ENCODE measurements at regions of chr4 and their contacts with region 1.

Region 1: GRCh38 chr4:75724066-75724866 is at the start of gene USO1:
- DNase-seq: peak; percentile 98 to 100 (median 99)
- ATAC-seq: peak; percentile 98
- H3K4me3 ChIP-seq: peak within 1 kb of the TSS; percentile 87
- H3K4me3 Mint-ChIP-seq: peak within 1 kb of the TSS; percentile 93 to 100 (median 100)
- H3K27ac ChIP-seq: peak within 1 kb of the TSS; percentile 91
- H3K27ac Mint-ChIP-seq: peak within 1 kb of the TSS; percentile 97 to 100 (median 99)
- H3K4me1 ChIP-seq: peaks cover 25 to 30% of the 10 kb centered on the region in 2 donors
- H3K4me1 Mint-ChIP-seq: peaks cover 32 to 60% (median 59%) of the 10 kb centered on the region in 7 donors
- H3K27me3 ChIP-seq: no peaks in the 10 kb centered on the region
- H3K27me3 Mint-ChIP-seq: peaks cover 0 to 4% (median 0%) of the 10 kb centered on the region in 5 donors
- total RNA-seq, gene USO1: 17.8 to 54.8 (median 35.0) TPM

Region 2: DNA sequence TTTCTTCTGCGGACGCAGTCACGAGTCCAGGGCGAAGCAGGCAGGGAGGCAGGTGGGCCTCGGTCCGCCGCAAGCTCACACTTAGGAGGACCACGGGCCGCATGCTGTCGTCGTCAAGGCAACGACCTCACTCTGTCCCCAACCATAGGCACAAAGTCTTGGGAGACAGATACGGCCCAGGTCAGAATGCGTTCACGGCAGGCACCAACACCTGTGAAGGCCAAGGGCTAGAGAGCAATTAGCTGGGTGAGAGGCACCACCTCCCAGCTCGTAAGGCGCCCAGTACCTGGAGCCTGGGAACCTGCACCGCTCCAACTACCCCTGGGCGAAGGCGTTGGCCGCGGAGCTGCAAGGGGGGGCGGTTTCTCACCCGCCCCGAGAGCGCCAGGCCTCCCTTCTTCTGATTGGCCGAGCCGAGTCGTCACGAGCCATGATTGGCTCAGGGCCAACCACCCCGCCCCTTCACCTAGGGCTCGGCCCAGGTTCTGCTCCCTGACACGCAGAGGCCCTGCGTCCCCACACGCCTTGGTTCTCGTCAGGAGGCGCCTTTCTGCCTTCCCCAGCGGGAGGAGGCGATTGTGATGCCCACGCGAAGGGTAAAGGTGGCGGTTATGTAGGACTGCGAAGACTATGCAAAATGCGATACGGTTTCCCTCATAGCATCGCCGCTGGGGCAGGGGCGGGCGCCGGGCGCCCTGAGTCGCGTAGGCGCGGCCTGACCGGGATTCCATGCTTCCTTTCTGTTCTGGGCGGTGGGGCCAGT is 93.9 kb before region 1 on chr4 and contains the start of gene CDKL2:
- CTCF ChIA-PET with region 1: interaction called, 4 read pairs
- POLR2A ChIA-PET with region 1: interaction called, 11 read pairs
- intact Hi-C with region 1: loop called (anchors 1 kb)
- DNase-seq: peak; percentile 85 to 93 (median 91)
- ATAC-seq: peak; percentile 100
- H3K4me3 ChIP-seq: peak within 1 kb of the TSS; percentile 74
- H3K4me3 Mint-ChIP-seq: peak within 1 kb of the TSS; percentile 88 to 97 (median 94)
- H3K27ac ChIP-seq: peak within 1 kb of the TSS; percentile 73
- H3K27ac Mint-ChIP-seq: peak within 1 kb of the TSS; percentile 66 to 94 (median 86)
- H3K4me1 ChIP-seq: peaks cover 0 to 7% of the 10 kb centered on the region in 2 donors
- H3K4me1 Mint-ChIP-seq: peaks cover 6 to 18% (median 11%) of the 10 kb centered on the region in 7 donors
- H3K27me3 ChIP-seq: no peaks in the 10 kb centered on the region
- H3K27me3 Mint-ChIP-seq: peaks cover 0 to 12% (median 0%) of the 10 kb centered on the region in 5 donors
- total RNA-seq, gene CDKL2: 0.22 to 1.2 (median 0.34) TPM

Region 3: DNA sequence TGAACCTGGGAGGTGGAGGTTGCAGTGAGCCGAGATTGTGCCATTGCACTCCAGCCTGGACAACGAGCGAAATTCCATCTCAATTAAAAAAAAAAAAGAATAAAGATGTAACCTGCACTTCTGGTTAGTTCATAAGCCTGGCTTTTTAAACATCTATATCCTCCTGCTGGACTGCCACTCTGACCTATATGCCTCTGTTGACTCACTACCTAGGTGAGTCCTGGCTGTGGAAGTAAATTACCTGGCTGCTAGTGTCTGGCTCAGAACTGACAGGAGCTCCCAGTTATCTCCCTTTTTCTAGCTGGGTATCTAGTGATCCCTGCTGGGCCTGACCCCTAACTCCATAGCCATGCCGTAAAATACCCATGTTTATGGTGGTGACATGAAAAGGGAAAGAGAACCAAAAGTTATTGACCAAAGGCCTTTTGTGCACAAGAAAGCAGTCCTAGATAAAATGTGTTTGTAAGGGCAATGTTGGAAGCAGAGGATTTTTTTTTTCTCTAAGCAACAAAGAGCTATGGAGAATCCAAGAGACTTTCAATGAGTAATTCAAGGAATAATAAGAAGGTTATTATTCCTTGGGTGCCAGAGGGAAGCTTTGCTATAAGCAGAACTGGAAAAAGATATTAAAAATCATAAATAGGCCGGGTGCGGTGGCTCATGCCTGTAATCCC is 40.6 kb before region 1 on chr4:
- CTCF ChIA-PET with region 1: interaction called, 3 read pairs
- POLR2A ChIA-PET with region 1: interaction called, 22 read pairs
- intact Hi-C with region 1: no loop called
- DNase-seq: no peak
- ATAC-seq: no peak
- H3K4me3 ChIP-seq: no peak overlapping the region
- H3K4me3 Mint-ChIP-seq: peak overlapping the region in 3 of 10 donors; percentile 11 to 67 (median 29)
- H3K27ac ChIP-seq: no peak overlapping the region
- H3K27ac Mint-ChIP-seq: peak overlapping the region in 8 of 9 donors; percentile 45 to 91 (median 83)
- H3K4me1 ChIP-seq: peaks cover 18 to 24% of the 10 kb centered on the region in 2 donors
- H3K4me1 Mint-ChIP-seq: peaks cover 10 to 47% (median 31%) of the 10 kb centered on the region in 7 donors
- H3K27me3 ChIP-seq: no peaks in the 10 kb centered on the region
- H3K27me3 Mint-ChIP-seq: no peaks in the 10 kb centered on the region

Region 4: DNA sequence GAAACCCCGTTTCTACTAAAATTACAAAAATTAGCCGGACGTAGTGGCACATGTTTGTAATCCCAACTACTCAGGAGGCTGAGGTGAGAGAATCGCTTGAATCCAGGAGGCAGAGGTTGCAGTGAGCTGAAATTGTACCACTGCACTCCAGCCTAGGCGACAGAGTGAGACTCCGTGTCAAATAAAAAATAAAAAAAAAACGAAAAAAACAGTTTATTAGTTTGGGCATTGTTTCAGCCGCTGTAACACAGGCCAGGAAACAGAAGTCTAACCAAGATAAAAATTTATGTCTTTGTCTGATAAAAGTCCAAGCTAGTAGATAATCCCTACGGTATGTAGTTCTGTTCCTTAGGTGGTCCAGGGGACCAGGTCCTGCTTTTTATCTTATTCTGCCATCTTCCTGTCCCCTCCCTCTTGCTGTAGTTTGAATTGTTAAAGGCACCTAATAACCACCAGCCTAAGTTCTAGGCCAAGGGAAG is 21.5 kb after region 1 on chr4:
- CTCF ChIA-PET with region 1: interaction called, 7 read pairs
- POLR2A ChIA-PET with region 1: interaction called, 7 read pairs
- intact Hi-C with region 1: loop called in 1 of 2 experiments (anchors 2 kb)
- DNase-seq: no peak
- ATAC-seq: no peak
- H3K4me3 ChIP-seq: no peak overlapping the region
- H3K4me3 Mint-ChIP-seq: no peak overlapping the region
- H3K27ac ChIP-seq: no peak overlapping the region
- H3K27ac Mint-ChIP-seq: no peak overlapping the region
- H3K4me1 ChIP-seq: no peaks in the 10 kb centered on the region
- H3K4me1 Mint-ChIP-seq: peaks cover 7 to 17% (median 10%) of the 10 kb centered on the region in 7 donors
- H3K27me3 ChIP-seq: no peaks in the 10 kb centered on the region
- H3K27me3 Mint-ChIP-seq: no peaks in the 10 kb centered on the region

Region 5: GRCh38 chr4:75989846-75990528 is 265.7 kb after region 1 on chr4:
- CTCF ChIA-PET with region 1: no interaction called
- POLR2A ChIA-PET with region 1: no interaction called
- intact Hi-C with region 1: loop called (anchors 1 to 2 kb)
- DNase-seq: peak in 4 of 9 donors; percentile 2 to 7 (median 4)
- ATAC-seq: no peak
- H3K4me3 ChIP-seq: peak overlapping the region; percentile 86
- H3K4me3 Mint-ChIP-seq: peak overlapping the region; percentile 87 to 98 (median 96)
- H3K27ac ChIP-seq: peak overlapping the region; percentile 86
- H3K27ac Mint-ChIP-seq: peak overlapping the region; percentile 85 to 97 (median 93)
- H3K4me1 ChIP-seq: peaks cover 13 to 39% of the 10 kb centered on the region in 2 donors
- H3K4me1 Mint-ChIP-seq: peaks cover 24 to 38% (median 30%) of the 10 kb centered on the region in 7 donors
- H3K27me3 ChIP-seq: no peaks in the 10 kb centered on the region
- H3K27me3 Mint-ChIP-seq: peaks cover 0 to 8% (median 2%) of the 10 kb centered on the region in 5 donors